Mammary epithelial cell (primary cell): ENCODE measurements at regions of chr10 and their contacts with region 1.

Region 1: DNA sequence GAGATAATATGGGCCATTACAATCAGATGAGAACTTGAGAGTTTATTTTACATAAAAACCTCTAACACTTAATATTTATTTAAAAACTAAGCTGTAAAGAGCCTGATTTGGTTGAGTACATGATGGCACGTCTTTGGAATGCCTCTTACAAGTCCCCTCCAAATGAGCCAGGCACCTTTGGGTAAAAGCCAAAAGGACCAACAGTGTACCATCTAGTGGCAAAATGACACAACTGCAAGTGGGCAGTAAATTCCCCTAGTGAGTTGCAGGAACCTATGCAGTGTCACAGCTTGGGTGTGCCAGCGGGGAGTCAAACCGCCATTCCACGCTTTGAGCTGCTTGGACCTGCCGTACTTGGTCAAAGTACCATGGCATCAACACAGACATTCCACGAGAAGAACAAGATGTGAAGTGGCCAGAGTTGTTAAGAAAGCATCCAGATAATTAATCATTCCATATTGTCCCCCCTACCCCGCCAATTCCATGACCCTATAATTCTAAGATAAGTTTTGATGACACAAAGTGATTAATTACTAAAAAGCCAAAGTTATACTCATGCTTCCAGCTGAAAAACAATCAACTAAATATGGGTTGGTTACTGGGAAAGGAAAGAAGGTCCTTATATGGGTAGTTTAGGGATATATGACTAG is 115.2 kb downstream of the SORBS1 start:
- DNase-seq: peak; percentile 69
- H3K4me3 ChIP-seq: no peak overlapping the region
- H3K27ac ChIP-seq: peak overlapping the region; percentile 66
- H3K4me1 ChIP-seq: peaks cover 16% of the 10 kb centered on the region
- H3K27me3 ChIP-seq: no peaks in the 10 kb centered on the region
- CTCF ChIP-seq: peak; percentile 89 to 93

Region 2: DNA sequence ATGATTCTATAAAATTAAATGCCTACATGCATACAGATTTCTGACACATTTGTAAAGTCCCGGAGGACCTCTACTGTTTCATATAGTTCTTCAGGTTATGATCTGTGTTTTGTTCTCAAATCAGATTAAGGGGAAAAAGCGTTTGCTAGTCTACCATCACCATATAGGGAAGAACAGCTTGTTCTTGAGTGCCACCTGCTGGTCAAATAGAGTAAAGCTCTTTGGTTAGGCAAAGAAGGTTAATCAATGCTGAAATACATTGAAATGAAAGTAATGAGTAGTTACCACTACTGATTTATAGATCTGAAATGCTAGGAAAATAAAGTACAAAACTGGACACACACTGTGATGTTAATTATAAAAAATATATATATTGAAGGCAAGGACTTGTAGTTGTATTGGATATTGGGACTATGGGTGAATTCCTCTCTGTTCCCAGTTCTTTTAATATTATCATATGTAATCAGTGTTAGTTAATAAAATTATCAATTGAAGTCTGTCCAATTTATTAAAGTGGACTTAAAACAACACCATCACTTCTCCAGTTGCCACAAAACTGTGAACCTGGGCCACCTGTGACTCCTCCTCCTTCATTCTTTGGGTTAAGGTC is 82.6 kb before region 1 on chr10:
- CTCF ChIA-PET with region 1: no interaction called
- dilution Hi-C with region 1: no loop called
- in situ Hi-C with region 1: no loop called
- intact Hi-C with region 1: no loop called
- DNase-seq: peak; percentile 52
- H3K4me3 ChIP-seq: no peak overlapping the region
- H3K27ac ChIP-seq: no peak overlapping the region
- H3K4me1 ChIP-seq: peaks cover 19% of the 10 kb centered on the region
- H3K27me3 ChIP-seq: no peaks in the 10 kb centered on the region
- CTCF ChIP-seq: peak; percentile 85 to 94

Region 3: DNA sequence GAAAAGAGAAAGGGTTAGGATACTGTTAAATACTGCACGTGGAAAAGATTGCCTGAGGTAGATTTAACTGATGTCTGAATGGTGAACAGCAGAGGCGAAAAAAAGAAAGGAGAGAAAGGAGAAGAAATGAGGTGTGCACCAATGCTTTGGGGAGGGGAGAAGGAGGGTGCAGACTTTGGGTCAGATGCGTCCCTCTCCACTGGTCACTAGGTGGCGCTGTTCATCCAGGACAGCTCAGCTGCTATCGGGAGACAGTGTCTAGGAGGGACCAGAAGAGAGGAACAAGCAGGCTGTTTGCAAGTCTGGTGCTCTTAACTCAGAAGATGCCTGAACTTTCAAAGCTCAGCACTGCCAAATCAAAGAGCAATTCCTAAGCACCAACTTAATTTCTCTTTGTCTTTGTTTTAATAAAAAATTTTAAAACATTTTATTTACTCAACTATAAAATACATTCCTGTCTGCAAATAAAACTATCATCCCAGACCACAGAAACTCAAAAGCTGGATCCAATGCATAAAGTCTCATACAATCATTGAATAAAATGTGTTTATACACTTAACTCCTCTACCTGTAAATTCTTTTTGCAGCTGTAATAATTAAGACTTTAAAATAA is 71.3 kb before region 1 on chr10:
- CTCF ChIA-PET with region 1: no interaction called
- dilution Hi-C with region 1: no loop called
- in situ Hi-C with region 1: no loop called
- intact Hi-C with region 1: loop called (anchors 1 kb)
- DNase-seq: peak; percentile 68
- H3K4me3 ChIP-seq: no peak overlapping the region
- H3K27ac ChIP-seq: no peak overlapping the region
- H3K4me1 ChIP-seq: no peaks in the 10 kb centered on the region
- H3K27me3 ChIP-seq: no peaks in the 10 kb centered on the region
- CTCF ChIP-seq: peak; percentile 95 to 99

Region 4: DNA sequence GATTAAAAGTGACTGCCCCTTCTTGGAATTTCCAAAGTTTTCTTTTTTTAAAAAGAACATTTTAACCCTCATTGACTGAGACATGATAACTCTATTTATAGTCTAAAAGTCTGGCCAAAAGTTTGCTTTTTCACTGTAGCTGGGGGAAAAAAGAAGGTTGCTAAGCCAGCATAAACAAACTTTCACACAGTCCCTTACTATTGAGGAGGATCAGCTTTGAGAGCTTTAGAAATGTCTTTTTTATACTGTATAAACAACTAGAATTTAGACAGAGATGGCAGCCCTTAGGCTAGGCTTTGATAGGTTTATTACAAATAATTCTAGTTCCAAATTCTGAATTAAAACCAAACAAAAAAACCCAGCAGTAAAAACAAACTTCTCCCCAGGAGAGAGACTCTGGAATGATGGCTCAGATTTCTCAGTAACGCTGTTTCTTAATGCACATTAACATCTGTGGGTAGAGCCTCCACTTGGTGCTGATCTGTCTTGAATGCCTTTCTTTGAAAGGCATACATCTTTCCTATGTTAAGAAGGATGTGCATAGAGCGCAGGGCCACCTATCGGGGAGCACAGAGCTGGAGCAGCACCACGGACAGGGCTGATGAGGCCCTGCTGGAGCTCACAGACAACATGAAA is 54.3 kb before region 1 on chr10:
- CTCF ChIA-PET with region 1: interaction called, 11 read pairs
- dilution Hi-C with region 1: no loop called
- in situ Hi-C with region 1: no loop called
- intact Hi-C with region 1: no loop called
- DNase-seq: peak; percentile 19
- H3K4me3 ChIP-seq: no peak overlapping the region
- H3K27ac ChIP-seq: no peak overlapping the region
- H3K4me1 ChIP-seq: peaks cover 14% of the 10 kb centered on the region
- H3K27me3 ChIP-seq: no peaks in the 10 kb centered on the region
- CTCF ChIP-seq: peak in 1 of 2 donors; percentile 20

Region 5: GRCh38 chr10:95430231-95430951 is 15.6 kb before region 1 on chr10:
- CTCF ChIA-PET with region 1: no interaction called
- dilution Hi-C with region 1: no loop called
- in situ Hi-C with region 1: no loop called
- intact Hi-C with region 1: loop called (anchors 1 kb)
- DNase-seq: peak; percentile 62
- H3K4me3 ChIP-seq: no peak overlapping the region
- H3K27ac ChIP-seq: no peak overlapping the region
- H3K4me1 ChIP-seq: peaks cover 16% of the 10 kb centered on the region
- H3K27me3 ChIP-seq: no peaks in the 10 kb centered on the region
- CTCF ChIP-seq: peak; percentile 88 to 94

Region 6: GRCh38 chr10:95561182-95562075 is 115.5 kb after region 1 on chr10 and contains the start of gene SORBS1:
- CTCF ChIA-PET with region 1: interaction called, 13 read pairs
- dilution Hi-C with region 1: no loop called
- in situ Hi-C with region 1: no loop called
- intact Hi-C with region 1: loop called (anchors 1 kb)
- DNase-seq: peak; percentile 98
- H3K4me3 ChIP-seq: peak within 1 kb of the TSS; percentile 84 to 87 (median 84)
- H3K27ac ChIP-seq: peak within 1 kb of the TSS; percentile 25
- H3K4me1 ChIP-seq: peaks cover 11% of the 10 kb centered on the region
- H3K27me3 ChIP-seq: peaks cover 5% of the 10 kb centered on the region
- CTCF ChIP-seq: no peak
- total RNA-seq, gene SORBS1: 1.6 to 9.8 TPM